ENCODE measurements at regions of chr20 and their contacts with region 1.

Region 1: GRCh38 chr20:45373353-45374100 is 4.6 kb downstream of the TP53TG5 start:
- DNase-seq: peak; percentile 89
- ATAC-seq: peak; percentile 89
- H3K4me3 Mint-ChIP-seq: peak overlapping the region; percentile 86
- H3K27ac Mint-ChIP-seq: peak overlapping the region; percentile 96
- H3K4me1 Mint-ChIP-seq: peaks cover 21% of the 10 kb centered on the region
- H3K27me3 Mint-ChIP-seq: no peaks in the 10 kb centered on the region

Region 2: DNA sequence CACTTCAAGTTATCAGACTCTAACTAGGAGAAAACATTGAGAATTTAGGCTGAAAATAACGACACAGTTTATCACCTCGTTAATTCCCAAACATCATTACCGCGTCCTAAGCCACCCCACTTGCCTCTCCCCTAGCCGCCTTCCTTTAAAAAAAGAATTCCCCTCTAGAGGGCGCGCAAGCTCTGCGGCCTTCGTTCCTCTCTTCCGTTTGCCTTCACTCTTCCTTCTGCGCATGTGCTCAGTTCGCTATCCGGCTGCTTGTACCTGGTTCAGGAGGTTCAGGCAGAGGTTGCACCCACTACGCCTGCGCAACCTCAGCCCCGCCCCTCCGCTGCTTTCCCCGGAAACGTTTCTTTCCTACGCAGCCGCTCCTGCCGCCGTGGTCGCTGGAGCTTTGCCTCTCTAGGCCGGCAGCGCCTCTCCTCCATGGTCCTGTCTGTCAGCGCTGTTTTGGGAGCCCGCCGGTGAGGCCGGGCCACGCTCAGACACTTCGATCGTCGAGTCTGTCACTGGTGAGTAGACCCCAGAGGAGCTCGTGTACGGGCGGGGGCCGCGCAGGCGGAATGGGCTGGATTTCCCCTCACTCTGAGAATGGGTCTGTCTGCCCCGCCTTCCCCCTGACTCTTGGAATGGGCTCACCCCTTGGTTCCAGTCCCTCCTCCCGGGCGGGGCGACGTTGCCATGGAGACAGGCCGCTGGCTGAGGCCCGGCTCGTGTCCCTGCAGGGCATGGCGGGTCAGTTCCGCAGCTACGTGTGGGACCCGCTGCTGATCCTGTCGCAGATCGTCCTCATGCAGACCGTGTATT is 10.5 kb before region 1 on chr20 and contains the start of gene SYS1:
- POLR2A ChIA-PET with region 1: interaction called, 49 read pairs
- DNase-seq: peak; percentile 97
- ATAC-seq: peak; percentile 92
- H3K4me3 Mint-ChIP-seq: peak within 1 kb of the TSS; percentile 97
- H3K27ac Mint-ChIP-seq: peak within 1 kb of the TSS; percentile 90
- H3K4me1 Mint-ChIP-seq: peaks cover 40% of the 10 kb centered on the region
- H3K27me3 Mint-ChIP-seq: no peaks in the 10 kb centered on the region
- total RNA-seq, gene SYS1: 34.9 to 38.6 TPM

Region 3: GRCh38 chr20:45406259-45407066 is 32.9 kb after region 1 on chr20:
- POLR2A ChIA-PET with region 1: interaction called, 23 read pairs
- DNase-seq: peak; percentile 63
- ATAC-seq: peak; percentile 62
- H3K4me3 Mint-ChIP-seq: peak overlapping the region; percentile 83
- H3K27ac Mint-ChIP-seq: peak overlapping the region; percentile 77
- H3K4me1 Mint-ChIP-seq: peaks cover 10% of the 10 kb centered on the region
- H3K27me3 Mint-ChIP-seq: peaks cover 15% of the 10 kb centered on the region

Region 4: GRCh38 chr20:45415774-45416637 is 42.5 kb after region 1 on chr20 and contains the start of gene PIGT:
- POLR2A ChIA-PET with region 1: interaction called, 14 read pairs
- DNase-seq: peak; percentile 87
- ATAC-seq: peak; percentile 95
- H3K4me3 Mint-ChIP-seq: peak within 1 kb of the TSS; percentile 92
- H3K27ac Mint-ChIP-seq: peak within 1 kb of the TSS; percentile 90
- H3K4me1 Mint-ChIP-seq: peaks cover 26% of the 10 kb centered on the region
- H3K27me3 Mint-ChIP-seq: no peaks in the 10 kb centered on the region
- total RNA-seq, gene PIGT: 64.9 to 72.7 TPM

Region 5: DNA sequence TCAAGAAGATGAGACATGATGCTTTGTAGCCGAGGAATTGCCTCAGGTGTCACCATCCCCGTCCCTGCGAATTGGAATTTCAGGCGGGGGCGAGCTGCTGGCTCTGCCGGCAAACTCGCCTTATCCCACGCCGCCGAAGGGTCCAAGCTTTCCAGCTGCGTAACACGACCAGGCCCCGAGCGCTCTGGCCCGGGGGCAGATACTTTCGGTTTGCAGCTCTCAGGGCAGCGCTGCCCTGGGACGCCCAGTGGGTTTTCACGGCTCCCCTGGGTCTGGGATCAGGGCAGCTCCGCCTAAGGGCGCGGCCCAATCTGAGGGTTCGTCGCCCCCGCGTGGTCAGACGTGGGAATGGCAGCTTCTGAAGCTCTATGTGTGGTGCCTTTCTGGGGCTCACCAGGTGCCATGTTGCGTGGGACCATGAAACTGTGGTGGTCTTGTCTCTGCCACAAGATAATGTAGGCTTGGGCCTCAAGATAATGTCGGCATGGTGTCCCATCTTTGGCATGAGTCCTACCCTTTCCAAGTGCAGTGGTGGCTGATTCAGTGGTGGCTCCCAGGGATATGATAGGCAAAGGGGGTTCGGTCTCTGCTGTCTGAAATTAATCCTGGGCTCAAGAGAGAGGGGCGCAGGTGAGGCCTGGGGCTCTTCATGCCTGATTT is 63.3 kb after region 1 on chr20:
- POLR2A ChIA-PET with region 1: interaction called, 31 read pairs
- DNase-seq: peak; percentile 92
- ATAC-seq: peak; percentile 98
- H3K4me3 Mint-ChIP-seq: peak overlapping the region; percentile 83
- H3K27ac Mint-ChIP-seq: peak overlapping the region; percentile 54
- H3K4me1 Mint-ChIP-seq: peaks cover 18% of the 10 kb centered on the region
- H3K27me3 Mint-ChIP-seq: no peaks in the 10 kb centered on the region